Thyroid gland (tissue), 4 donors: ENCODE measurements at regions of chr22 and their contacts with region 1.

Region 1: GRCh38 chr22:45577746-45578523 is 75.3 kb downstream of the FBLN1 start:
- DNase-seq: peak; percentile 82 to 83
- H3K4me3 ChIP-seq: no peak overlapping the region
- H3K27ac ChIP-seq: no peak overlapping the region
- H3K4me1 ChIP-seq: no peaks in the 10 kb centered on the region
- H3K27me3 ChIP-seq: no peaks in the 10 kb centered on the region
- CTCF ChIP-seq: peak; percentile 83 to 95 (median 90)
- POLR2A ChIP-seq: no peak

Region 2: GRCh38 chr22:45640291-45640940 is 62.5 kb after region 1 on chr22:
- intact Hi-C with region 1: loop called (anchors 5 kb)
- DNase-seq: no peak
- H3K4me3 ChIP-seq: no peak overlapping the region
- H3K27ac ChIP-seq: no peak overlapping the region
- H3K4me1 ChIP-seq: peaks cover 2 to 3% of the 10 kb centered on the region in 2 donors
- H3K27me3 ChIP-seq: no peaks in the 10 kb centered on the region
- CTCF ChIP-seq: no peak
- POLR2A ChIP-seq: no peak

Region 3: DNA sequence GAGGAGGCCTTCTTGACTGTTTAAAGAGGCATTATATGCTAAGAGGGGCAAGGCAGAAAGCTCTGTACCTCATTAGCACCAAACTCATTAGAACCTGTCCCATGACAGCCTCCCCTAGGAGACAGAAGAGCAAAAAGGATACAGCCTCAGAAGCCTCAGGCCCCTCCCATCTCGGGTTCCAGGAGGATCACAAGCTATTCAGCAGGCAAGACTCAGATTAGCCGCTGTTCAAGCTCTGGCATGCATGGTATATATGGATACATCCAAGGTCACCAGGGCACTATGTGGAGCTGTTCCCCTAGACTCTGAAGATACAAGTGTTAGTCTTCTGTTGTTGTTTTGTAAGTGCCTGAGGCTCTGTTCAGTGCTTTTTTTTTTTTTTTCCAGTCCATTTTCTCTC is 125.8 kb after region 1 on chr22:
- intact Hi-C with region 1: no loop called
- DNase-seq: no peak
- H3K4me3 ChIP-seq: no peak overlapping the region
- H3K27ac ChIP-seq: no peak overlapping the region
- H3K4me1 ChIP-seq: no peaks in the 10 kb centered on the region
- H3K27me3 ChIP-seq: no peaks in the 10 kb centered on the region
- CTCF ChIP-seq: no peak
- POLR2A ChIP-seq: no peak

Region 4: GRCh38 chr22:45977003-45977411 is 399.1 kb after region 1 on chr22 and contains the start of gene WNT7B:
- intact Hi-C with region 1: loop called (anchors 2 kb)
- DNase-seq: peak; percentile 46 to 48
- H3K4me3 ChIP-seq: peak within 1 kb of the TSS in 1 of 3 donors; percentile 27
- H3K27ac ChIP-seq: no peak within 1 kb of the TSS
- H3K4me1 ChIP-seq: peaks cover 14 to 44% of the 10 kb centered on the region in 2 donors
- H3K27me3 ChIP-seq: no peaks in the 10 kb centered on the region
- CTCF ChIP-seq: no peak
- POLR2A ChIP-seq: peak in 1 of 2 donors; percentile 23
- total RNA-seq, gene WNT7B: 0.83 to 4.3 (median 2.5) TPM in 3 of 4 donors, not detected in the other